ENCODE measurements at regions of chr19 and their contacts with region 1.

Region 1: GRCh38 chr19:46661020-46661731 is at the start of gene DACT3:
- DNase-seq: peak; percentile 100
- ATAC-seq: peak; percentile 98
- total RNA-seq, gene DACT3: 22.2 TPM

Region 2: DNA sequence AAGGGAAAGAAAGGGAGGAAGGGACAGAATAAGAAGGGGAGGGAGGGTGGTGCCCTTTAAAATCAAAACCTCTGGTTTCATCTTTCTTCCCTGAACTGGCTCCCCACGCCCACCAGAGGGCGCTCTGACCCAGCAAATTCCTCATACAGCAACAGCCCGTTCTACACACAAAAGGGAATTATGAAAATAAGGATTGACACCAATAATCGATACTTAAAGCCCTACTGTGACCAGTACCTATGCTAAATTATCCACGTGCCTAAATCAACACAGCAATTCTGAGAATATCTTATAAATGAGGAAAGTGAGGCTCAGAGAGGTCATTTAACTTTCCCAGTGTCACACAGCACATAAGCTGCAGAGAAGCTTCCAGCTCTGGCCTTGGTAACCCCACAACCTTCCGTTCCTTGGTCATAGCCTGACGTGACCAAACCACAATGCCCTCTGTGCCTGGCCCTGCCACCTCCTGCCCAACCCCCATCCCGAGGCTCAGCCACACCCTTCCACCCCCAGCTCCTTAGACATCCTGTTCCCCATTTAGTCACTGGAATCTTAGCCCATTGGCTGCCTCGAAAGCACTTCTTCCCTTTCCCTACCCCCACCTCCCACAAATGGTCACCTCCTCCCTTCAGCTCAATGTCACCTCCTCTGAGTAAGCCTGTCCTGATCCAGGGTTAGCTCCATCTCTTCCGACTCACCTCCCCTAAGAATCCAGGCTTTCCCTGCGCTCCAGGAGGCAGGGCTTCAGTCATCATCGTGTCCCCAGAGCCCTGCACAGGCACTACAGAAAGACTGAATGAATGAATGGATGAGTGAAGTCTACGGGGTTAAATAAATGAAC is 131.3 kb before region 1 on chr19:
- intact Hi-C with region 1: loop called (anchors 5 kb)
- DNase-seq: peak; percentile 85
- ATAC-seq: peak; percentile 74

Region 3: GRCh38 chr19:46614114-46614722 is 47.0 kb before region 1 on chr19:
- intact Hi-C with region 1: loop called (anchors 10 kb)
- DNase-seq: peak; percentile 93
- ATAC-seq: peak; percentile 87

Region 4: GRCh38 chr19:46635920-46636761 is 25.0 kb before region 1 on chr19 and contains the start of gene GNG8:
- intact Hi-C with region 1: loop called (anchors 2 kb)
- DNase-seq: no peak
- ATAC-seq: no peak
- total RNA-seq, gene GNG8: not detected